ENCODE measurements at regions of chr5 and their contacts with region 1.

Region 1: GRCh38 chr5:159451197-159452052 is 121.1 kb upstream of the IL12B start:
- DNase-seq: no peak

Region 2: DNA sequence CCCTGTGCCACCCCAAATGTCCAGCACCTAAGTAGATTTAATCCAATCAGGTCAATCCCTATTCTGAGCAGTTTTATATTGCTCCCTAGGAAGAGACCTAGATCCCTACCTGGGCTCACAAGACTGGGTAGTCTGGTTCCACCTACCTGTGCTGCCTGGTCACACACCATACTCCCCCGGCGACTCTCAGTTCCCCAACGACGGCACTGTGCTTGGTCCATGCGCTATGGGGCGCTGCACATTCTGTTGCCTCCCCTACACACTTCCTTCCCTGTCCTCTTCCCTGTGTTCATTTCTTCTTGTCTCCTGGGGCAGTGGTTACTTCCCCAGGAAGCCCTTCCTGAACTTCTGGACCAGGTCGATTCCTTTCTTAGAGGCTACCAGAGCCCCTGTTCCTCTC is 11.2 kb before region 1 on chr5:
- intact Hi-C with region 1: no loop called
- DNase-seq: no peak

Region 3: DNA sequence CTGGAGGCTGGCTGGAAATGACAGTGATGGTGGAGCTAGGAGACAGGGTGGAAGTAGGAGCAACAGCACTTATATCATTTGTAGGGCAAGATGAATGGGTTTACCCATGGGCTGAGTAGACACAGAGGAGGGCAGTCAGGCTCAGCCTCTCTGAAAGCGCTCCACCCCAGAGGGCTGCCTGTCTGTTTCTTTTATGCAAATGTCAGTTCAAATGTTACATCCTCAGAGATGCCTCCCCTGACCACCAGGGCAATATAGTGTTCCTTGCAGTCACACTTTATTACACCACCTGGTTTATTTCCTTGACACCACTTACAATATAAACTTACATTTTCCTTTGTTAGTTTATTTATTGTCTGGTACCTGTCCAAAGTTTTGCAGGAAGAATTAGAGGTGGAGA is 38.4 kb after region 1 on chr5:
- intact Hi-C with region 1: loop called in 1 of 2 experiments (anchors 1 kb)
- DNase-seq: no peak